Activated CD4-positive, alpha-beta T cell treated with anti-CD3 and anti-CD28 coated beads, Interleukin-2, amount 10 ng/mL, durations not matched to agents 24 days and 14 days (primary cell): ENCODE measurements at regions of chr6 and their contacts with region 1.

Region 1: DNA sequence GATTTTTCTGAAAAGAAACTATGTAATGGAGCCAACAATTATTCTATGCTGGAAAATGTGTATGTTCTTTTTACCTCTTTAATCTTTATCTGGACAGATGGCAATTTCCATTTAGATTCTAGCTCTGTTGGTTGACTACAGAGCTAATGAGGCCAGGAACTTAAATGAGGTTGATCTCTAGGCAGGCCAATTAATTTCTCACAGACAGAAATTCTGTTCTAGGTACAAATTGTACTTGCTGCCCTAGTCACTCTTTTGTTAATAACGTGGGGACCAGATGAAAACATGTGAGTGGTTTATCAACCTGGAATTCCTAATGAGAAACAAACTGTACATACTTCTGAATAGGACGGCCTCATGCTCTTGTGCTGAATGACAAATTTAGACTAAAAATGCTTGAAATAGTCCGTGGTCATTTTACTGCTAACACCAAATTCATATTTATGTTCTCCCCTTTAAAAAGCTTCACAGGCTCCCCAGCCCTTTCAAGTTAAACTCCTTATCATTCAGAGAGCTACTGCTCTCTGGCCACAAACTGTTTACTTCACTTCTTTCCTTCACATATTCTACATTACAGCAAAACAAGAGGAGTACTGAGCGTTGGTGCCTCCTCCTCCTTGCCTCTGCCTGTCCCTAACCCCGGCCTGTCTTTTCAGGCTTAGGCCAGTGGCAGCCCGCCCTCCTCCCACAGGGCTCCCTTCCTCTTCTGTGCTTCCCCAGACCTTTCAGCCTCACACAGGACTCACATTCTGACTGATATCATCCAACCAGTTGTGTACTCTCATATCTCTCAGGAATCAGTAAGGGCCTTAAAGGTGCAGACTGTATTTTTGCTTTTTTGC is 41.4 kb downstream of the DTNBP1 start:
- DNase-seq: no peak
- H3K4me3 Mint-ChIP-seq: no peak overlapping the region
- H3K27ac Mint-ChIP-seq: peak overlapping the region; percentile 80
- H3K4me1 Mint-ChIP-seq: peaks cover 11% of the 10 kb centered on the region
- H3K27me3 Mint-ChIP-seq: no peaks in the 10 kb centered on the region

Region 2: GRCh38 chr6:13908955-13909381 is 1712.5 kb before region 1 on chr6:
- intact Hi-C with region 1: loop called (anchors 1 kb)
- DNase-seq: peak; percentile 80
- H3K4me3 Mint-ChIP-seq: no peak overlapping the region
- H3K27ac Mint-ChIP-seq: no peak overlapping the region
- H3K4me1 Mint-ChIP-seq: peaks cover 6% of the 10 kb centered on the region
- H3K27me3 Mint-ChIP-seq: peaks cover 45% of the 10 kb centered on the region

Region 3: GRCh38 chr6:14210663-14211561 is 1410.5 kb before region 1 on chr6:
- intact Hi-C with region 1: loop called (anchors 2 kb)
- DNase-seq: peak; percentile 98
- H3K4me3 Mint-ChIP-seq: peak overlapping the region; percentile 85
- H3K27ac Mint-ChIP-seq: peak overlapping the region; percentile 85
- H3K4me1 Mint-ChIP-seq: peaks cover 21% of the 10 kb centered on the region
- H3K27me3 Mint-ChIP-seq: no peaks in the 10 kb centered on the region

Region 4: GRCh38 chr6:14743465-14744211 is 877.8 kb before region 1 on chr6:
- intact Hi-C with region 1: loop called (anchors 10 kb)
- DNase-seq: peak; percentile 90
- H3K4me3 Mint-ChIP-seq: peak overlapping the region; percentile 30
- H3K27ac Mint-ChIP-seq: peak overlapping the region; percentile 98
- H3K4me1 Mint-ChIP-seq: peaks cover 74% of the 10 kb centered on the region
- H3K27me3 Mint-ChIP-seq: no peaks in the 10 kb centered on the region

Region 5: GRCh38 chr6:15491255-15491985 is 130.0 kb before region 1 on chr6:
- intact Hi-C with region 1: loop called (anchors 1 kb)
- DNase-seq: peak; percentile 91
- H3K4me3 Mint-ChIP-seq: no peak overlapping the region
- H3K27ac Mint-ChIP-seq: peak overlapping the region; percentile 74
- H3K4me1 Mint-ChIP-seq: peaks cover 38% of the 10 kb centered on the region
- H3K27me3 Mint-ChIP-seq: no peaks in the 10 kb centered on the region

Region 6: DNA sequence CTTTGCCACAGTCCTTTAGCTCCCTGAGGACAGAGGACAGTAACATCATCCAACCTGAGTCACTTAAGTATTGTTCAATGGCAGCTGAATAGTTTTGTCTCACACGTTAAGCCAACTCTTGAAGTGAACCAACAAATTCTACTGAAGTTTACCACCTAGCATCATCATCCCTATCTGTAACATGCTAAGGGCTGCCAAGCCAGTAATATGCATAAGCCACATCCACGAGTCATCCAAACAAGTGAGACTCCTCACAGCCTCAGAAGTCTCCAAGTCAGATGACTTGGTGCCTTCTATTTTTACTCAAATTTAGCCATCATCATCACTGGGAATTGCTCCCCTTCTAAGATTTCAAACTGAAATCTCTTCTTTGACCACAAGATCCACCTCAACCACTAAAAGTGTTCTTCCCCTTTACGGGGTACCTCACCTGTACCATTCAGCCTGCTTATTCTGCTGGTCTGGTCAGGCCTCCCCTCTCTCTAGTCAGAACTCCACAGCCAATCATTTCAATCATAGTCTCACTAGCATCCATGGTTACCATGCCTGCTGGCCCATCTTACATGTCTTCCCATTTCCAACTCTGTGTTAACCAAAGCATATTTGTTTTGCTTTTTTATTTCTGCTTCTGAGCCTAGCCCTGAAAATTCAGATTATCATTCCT is 32.3 kb before region 1 on chr6:
- intact Hi-C with region 1: loop called (anchors 5 kb)
- DNase-seq: no peak
- H3K4me3 Mint-ChIP-seq: no peak overlapping the region
- H3K27ac Mint-ChIP-seq: peak overlapping the region; percentile 14
- H3K4me1 Mint-ChIP-seq: peaks cover 15% of the 10 kb centered on the region
- H3K27me3 Mint-ChIP-seq: no peaks in the 10 kb centered on the region

Region 7: GRCh38 chr6:15841937-15842705 is 220.7 kb after region 1 on chr6:
- intact Hi-C with region 1: no loop called
- DNase-seq: no peak
- H3K4me3 Mint-ChIP-seq: no peak overlapping the region
- H3K27ac Mint-ChIP-seq: no peak overlapping the region
- H3K4me1 Mint-ChIP-seq: no peaks in the 10 kb centered on the region
- H3K27me3 Mint-ChIP-seq: peaks cover 6% of the 10 kb centered on the region